ENCODE measurements at regions of chr14 and their contacts with region 1.

Region 1: GRCh38 chr14:80678436-80678835 is 263.1 kb downstream of the CEP128 start:
- DNase-seq: no peak

Region 2: GRCh38 chr14:80560800-80561657 is 117.4 kb before region 1 on chr14:
- intact Hi-C with region 1: loop called in 1 of 2 experiments (anchors 5 kb)
- DNase-seq: no peak

Region 3: GRCh38 chr14:81565441-81566290 is 887.2 kb after region 1 on chr14:
- intact Hi-C with region 1: no loop called
- DNase-seq: no peak

Measured in posterior vena cava (tissue), 2 donors.